ENCODE measurements at regions of chr2 and their contacts with region 1.

Region 1: GRCh38 chr2:10124538-10125045 is 2.1 kb downstream of the RRM2 start:
- DNase-seq: no peak
- H3K4me3 ChIP-seq: no peak overlapping the region
- H3K27ac ChIP-seq: no peak overlapping the region
- H3K4me1 ChIP-seq: peaks cover 40% of the 10 kb centered on the region
- H3K27me3 ChIP-seq: peaks cover 25% of the 10 kb centered on the region
- CTCF ChIP-seq: peak; percentile 79

Region 2: GRCh38 chr2:9993488-9994165 is 131.0 kb before region 1 on chr2:
- intact Hi-C with region 1: no loop called
- DNase-seq: no peak
- H3K4me3 ChIP-seq: no peak overlapping the region
- H3K27ac ChIP-seq: peak overlapping the region; percentile 26
- H3K4me1 ChIP-seq: peaks cover 68% of the 10 kb centered on the region
- H3K27me3 ChIP-seq: no peaks in the 10 kb centered on the region
- CTCF ChIP-seq: peak; percentile 23

Region 3: GRCh38 chr2:10072656-10073480 is 51.7 kb before region 1 on chr2:
- intact Hi-C with region 1: no loop called
- DNase-seq: peak; percentile 73
- H3K4me3 ChIP-seq: no peak overlapping the region
- H3K27ac ChIP-seq: no peak overlapping the region
- H3K4me1 ChIP-seq: peaks cover 13% of the 10 kb centered on the region
- H3K27me3 ChIP-seq: peaks cover 11% of the 10 kb centered on the region
- CTCF ChIP-seq: peak; percentile 87

Region 4: DNA sequence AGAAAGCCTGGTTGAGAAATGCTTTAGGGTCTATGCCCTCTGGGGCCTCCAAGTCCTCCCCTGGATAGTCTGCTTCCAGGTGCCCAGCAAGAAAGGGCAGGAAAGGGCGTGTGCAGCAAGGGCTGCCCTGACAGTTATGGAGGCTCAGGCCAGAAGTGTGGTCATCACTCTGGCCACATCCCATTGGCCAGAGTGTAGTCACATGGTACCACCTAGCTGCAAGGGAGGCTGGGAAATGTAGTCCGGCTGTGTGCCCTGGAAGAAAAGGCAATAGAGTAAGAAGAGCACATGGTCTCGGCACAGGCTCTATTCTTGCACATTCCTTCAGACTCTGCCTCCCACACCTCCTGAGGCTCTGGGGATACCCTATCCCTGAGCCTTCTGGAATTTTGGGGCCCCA is 287.8 kb after region 1 on chr2:
- intact Hi-C with region 1: no loop called
- DNase-seq: no peak
- H3K4me3 ChIP-seq: no peak overlapping the region
- H3K27ac ChIP-seq: no peak overlapping the region
- H3K4me1 ChIP-seq: peaks cover 44% of the 10 kb centered on the region
- H3K27me3 ChIP-seq: no peaks in the 10 kb centered on the region
- CTCF ChIP-seq: no peak

Region 5: DNA sequence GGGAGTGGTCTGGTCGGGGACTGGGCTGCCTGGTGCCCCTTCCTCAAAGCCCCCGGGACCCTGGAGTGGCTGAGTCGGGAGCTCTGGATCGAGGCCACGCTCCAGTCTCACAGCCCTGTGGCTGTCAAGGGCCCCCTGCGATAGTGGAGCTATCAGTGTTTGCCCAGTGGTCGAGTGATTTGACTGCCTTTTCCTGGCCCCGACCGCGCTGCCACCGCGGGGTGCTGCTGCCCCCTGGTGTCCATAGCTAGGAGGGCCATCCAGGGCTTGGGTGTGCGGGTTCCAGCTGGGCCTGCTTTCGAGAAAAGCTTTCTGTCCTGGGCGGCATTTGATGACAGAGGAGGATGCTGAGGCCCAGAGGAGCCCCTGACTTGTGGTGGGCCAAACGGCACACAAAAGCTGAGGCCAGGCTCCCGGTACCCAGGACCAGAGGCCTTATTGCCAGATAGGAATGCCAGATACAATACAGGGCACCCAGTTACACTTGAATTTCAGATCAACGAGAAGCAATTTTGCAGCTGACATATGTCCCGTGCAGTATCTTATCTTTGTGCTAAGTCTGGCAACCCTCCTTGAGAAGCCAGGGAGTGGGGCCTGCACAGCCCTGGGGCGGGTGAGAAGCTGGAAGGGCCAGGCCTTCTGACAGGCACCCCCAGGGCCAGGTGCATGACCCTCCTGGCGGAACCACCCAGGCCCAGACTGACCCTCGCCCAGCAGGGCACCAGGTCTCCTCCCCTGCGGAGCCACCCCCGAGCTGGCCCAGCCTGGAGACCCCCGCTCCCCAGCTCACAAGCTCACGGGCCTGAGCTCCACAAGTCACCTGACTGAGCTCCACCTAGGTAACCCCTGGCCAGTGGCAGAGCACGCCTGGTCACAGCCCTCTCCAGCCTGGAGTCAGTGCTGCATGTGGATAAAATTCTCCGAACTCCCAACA is 310.6 kb after region 1 on chr2:
- intact Hi-C with region 1: loop called (anchors 5 kb)
- DNase-seq: peak; percentile 62
- H3K4me3 ChIP-seq: no peak overlapping the region
- H3K27ac ChIP-seq: no peak overlapping the region
- H3K4me1 ChIP-seq: peaks cover 18% of the 10 kb centered on the region
- H3K27me3 ChIP-seq: peaks cover 23% of the 10 kb centered on the region
- CTCF ChIP-seq: peak; percentile 97